ENCODE measurements at regions of chr6 and their contacts with region 1.

Region 1: GRCh38 chr6:1601158-1602048 is 8.3 kb upstream of the FOXC1 start:
- DNase-seq: no peak
- H3K4me3 ChIP-seq: peak overlapping the region in 4 of 7 experiments; percentile 20 to 56 (median 34)
- H3K27ac ChIP-seq: no peak overlapping the region
- H3K4me1 ChIP-seq: peaks cover 0 to 27% (median 19%) of the 10 kb centered on the region in 4 experiments
- H3K27me3 ChIP-seq: peaks cover 12 to 88% (median 54%) of the 10 kb centered on the region in 5 experiments

Region 2: DNA sequence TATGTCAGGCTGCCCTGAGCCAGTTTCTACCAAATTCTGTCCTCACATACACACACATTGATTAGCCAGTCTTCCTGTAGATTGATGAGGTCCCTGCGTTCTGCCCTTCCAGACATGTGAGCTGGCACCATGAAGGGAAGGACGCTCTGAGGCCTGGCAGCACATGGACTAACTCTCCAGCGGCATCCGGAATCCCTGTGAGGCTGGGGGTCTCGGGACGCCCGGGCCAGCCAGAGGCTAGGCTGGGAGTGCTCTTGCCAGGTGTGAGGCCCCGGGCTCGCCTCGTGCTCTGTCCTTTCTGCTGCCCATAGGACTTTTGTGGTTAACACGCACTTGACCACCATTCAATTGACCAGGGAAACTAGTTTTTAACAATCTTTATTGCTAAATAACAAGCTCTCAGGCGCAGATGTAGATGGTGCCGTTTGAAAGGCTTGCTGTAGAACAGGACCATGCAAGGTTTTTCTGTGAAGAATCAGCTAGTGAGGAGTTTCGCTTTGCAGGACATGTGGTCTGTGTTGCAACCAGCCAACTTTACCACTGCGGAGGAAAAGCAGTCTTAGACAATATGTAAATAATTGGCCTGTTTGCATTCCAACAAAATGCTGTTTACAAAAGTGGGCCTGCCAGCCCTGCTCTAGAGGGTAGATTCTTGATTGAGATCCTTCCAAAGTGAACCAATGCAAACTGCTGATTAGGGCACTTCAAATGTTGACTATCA is 182.8 kb before region 1 on chr6:
- CTCF ChIA-PET with region 1: no interaction called
- POLR2A ChIA-PET with region 1: no interaction called
- DNase-seq: no peak
- H3K4me3 ChIP-seq: no peak overlapping the region
- H3K27ac ChIP-seq: no peak overlapping the region
- H3K4me1 ChIP-seq: no peaks in the 10 kb centered on the region
- H3K27me3 ChIP-seq: peaks cover under 1 to 21% (median 12%) of the 10 kb centered on the region in 5 experiments

Region 3: GRCh38 chr6:1558388-1558787 is 43.0 kb before region 1 on chr6:
- CTCF ChIA-PET with region 1: no interaction called
- POLR2A ChIA-PET with region 1: no interaction called
- DNase-seq: no peak
- H3K4me3 ChIP-seq: no peak overlapping the region
- H3K27ac ChIP-seq: no peak overlapping the region
- H3K4me1 ChIP-seq: peaks cover 0 to 13% (median 6%) of the 10 kb centered on the region in 4 experiments
- H3K27me3 ChIP-seq: peaks cover 0 to 1% (median 0%) of the 10 kb centered on the region in 5 experiments

Region 4: DNA sequence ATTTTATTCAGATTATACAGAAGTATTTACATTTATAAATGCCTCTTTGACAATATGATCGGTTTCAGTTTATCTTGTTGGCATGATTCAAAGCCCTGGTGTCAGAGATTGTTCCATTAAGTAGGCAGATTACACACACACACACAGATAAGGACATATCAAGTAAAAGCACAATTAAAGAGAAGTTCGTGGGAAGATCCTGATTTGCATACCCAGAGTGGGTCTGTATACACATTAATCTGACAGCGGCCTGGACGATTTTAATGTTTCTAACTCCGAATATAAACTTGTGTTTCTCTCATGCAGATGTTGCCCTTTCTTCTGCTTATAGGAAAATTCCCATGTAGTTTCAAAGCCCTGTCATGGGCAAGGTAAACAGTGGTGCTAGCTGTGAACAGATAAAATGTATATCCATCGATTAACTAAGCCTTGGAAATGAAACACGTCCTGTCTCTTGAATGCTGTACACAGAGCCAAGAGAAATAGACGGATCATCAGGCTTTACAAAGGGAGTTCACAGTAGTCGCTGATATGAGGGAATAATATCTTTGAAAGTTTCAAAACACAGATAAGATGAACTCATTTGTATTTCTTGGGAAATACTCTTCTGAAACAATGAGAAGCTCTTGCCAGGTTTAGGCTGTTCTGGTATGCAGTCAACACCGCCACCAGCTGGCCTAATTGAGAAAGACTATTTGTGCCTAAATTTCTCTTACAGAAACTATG is 752.2 kb after region 1 on chr6:
- CTCF ChIA-PET with region 1: interaction called, 18 read pairs
- POLR2A ChIA-PET with region 1: interaction called, 3 read pairs
- DNase-seq: peak; percentile 68 to 85 (median 78)
- H3K4me3 ChIP-seq: no peak overlapping the region
- H3K27ac ChIP-seq: no peak overlapping the region
- H3K4me1 ChIP-seq: peaks cover 0 to 4% (median under 1%) of the 10 kb centered on the region in 4 experiments
- H3K27me3 ChIP-seq: no peaks in the 10 kb centered on the region

Measured in common myeloid progenitor, CD34-positive (primary cell).